Right ventricle myocardium inferior (tissue), 1 donor: ENCODE measurements at regions of chr11 and their contacts with region 1.

Region 1: GRCh38 chr11:9314291-9315036 is at the start of gene TMEM41B:
- DNase-seq: peak; percentile 99
- ATAC-seq: peak; percentile 100
- total RNA-seq, gene TMEM41B: 17.4 TPM

Region 2: DNA sequence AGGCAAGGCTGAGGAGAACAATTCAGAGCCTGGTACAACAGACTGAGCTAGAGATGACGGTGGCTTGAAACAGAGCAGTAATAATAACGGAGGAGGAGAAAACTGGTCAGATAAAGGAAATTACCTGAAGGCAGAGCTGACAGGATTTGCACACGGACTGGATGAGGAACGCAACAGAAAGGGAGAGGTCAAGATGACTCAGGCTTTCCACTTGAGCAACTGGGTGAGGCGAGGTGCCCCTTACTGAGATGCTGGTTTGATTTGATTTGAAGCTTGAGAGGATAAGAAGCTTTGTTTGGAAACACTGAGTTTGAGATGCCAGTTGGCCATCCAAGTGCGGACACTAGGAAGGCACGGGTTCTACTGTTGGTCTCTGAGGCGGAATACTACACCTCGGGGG is 275.3 kb before region 1 on chr11:
- intact Hi-C with region 1: no loop called
- DNase-seq: no peak
- ATAC-seq: no peak

Region 3: DNA sequence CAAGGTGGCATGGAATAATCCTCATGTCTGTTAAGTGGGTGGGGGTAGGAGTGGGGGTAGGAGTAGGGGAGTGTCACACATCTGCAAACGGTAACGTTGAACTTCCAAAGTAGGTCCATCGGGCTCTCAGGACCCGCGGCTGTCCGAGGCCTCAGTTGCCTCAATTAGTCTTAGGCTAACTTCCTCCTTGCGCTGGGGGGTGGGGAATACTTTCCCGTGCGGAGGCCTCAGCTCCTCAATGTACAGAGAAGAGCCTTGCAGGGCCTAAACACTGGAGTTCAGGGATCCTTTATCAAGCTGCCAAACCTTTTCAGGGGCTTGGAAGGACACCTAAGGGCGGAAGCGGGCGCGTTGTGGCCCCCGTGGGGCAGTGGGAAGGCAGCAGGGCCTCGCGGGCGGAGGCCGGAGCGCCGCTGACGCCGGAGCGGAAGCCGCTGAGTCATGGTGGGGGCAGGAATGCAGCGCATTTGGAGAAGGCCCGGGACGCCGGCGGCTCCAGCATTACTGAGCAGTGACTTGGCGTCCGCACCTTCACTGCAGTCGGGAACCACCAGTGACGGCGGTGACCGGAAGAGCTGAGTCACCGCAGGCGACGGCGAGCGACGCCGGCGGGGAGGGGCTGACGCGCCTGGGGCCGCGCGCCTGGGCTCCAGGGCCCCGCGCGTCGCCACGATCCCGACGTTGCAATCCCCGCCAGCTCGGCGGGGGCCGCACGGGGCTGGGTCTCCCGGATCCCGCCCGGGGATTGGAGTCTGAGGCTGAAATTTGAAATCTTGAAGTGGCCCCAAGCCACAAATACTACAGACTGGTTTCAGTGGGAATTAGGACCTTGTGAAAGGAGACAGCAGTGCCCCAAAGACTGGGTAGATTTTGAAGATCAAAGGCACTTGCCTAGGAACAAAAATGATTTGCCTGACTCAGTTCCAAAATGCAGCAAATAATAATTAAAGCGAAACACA is 49.8 kb after region 1 on chr11:
- intact Hi-C with region 1: loop called (anchors 1 kb)
- DNase-seq: peak; percentile 98
- ATAC-seq: peak; percentile 97

Region 4: DNA sequence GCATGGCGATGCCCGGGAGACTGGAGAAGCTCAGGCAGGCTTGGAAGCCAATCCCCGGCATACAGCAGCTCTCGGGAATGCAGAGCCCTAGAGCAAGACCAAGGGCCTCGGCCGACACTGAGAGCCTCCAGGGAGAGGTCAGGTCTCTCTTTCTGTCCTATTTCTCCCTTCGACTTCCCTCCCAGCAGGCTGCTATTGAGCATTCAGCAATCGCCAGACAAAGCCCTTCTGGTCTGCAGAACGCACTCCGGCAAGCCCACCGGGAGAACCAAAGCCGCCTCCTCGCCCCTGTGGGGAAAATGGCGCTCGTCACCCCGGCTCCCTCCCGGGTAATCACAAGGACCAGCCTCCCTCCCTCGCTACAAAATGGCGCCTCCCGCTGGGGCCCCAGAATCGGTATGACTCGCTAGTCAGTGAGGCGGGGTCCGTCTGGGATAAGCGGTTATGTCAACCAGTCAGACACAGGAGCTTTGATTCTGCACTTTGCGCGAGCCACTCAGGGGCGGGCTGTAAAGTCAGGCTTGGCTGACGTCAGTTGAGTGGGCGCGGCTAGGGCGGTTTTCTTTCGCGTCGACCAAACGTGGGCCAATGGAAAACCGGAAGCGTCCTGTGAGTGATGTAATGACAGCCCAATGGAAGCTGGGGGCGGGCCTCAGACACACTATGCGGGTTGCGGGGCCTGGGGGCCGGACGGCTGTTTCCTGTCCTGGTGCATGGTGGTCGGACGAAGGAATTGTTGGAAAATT is 146.0 kb after region 1 on chr11 and contains the start of gene ZNF143:
- intact Hi-C with region 1: loop called (anchors 1 kb)
- DNase-seq: peak; percentile 100
- ATAC-seq: peak; percentile 98
- total RNA-seq, gene ZNF143: 22.7 TPM